Activated CD4-positive, alpha-beta T cell treated with anti-CD3 and anti-CD28 coated beads for 36 hours (primary cell): ENCODE measurements at regions of chr12 and their contacts with region 1.

Region 1: GRCh38 chr12:123983822-123984485 is 10.9 kb downstream of the ZNF664 start:
- DNase-seq: peak; percentile 65
- ATAC-seq: peak; percentile 90
- H3K4me3 Mint-ChIP-seq: no peak overlapping the region
- H3K27ac Mint-ChIP-seq: no peak overlapping the region
- H3K4me1 Mint-ChIP-seq: peaks cover 18% of the 10 kb centered on the region
- H3K27me3 Mint-ChIP-seq: no peaks in the 10 kb centered on the region

Region 2: GRCh38 chr12:123801573-123802178 is 182.3 kb before region 1 on chr12:
- CTCF ChIA-PET with region 1: interaction called, 6 read pairs
- POLR2A ChIA-PET with region 1: no interaction called
- intact Hi-C with region 1: loop called in 1 of 2 experiments (anchors 1 kb)
- DNase-seq: no peak
- ATAC-seq: no peak
- H3K4me3 Mint-ChIP-seq: no peak overlapping the region
- H3K27ac Mint-ChIP-seq: no peak overlapping the region
- H3K4me1 Mint-ChIP-seq: no peaks in the 10 kb centered on the region
- H3K27me3 Mint-ChIP-seq: no peaks in the 10 kb centered on the region

Region 3: DNA sequence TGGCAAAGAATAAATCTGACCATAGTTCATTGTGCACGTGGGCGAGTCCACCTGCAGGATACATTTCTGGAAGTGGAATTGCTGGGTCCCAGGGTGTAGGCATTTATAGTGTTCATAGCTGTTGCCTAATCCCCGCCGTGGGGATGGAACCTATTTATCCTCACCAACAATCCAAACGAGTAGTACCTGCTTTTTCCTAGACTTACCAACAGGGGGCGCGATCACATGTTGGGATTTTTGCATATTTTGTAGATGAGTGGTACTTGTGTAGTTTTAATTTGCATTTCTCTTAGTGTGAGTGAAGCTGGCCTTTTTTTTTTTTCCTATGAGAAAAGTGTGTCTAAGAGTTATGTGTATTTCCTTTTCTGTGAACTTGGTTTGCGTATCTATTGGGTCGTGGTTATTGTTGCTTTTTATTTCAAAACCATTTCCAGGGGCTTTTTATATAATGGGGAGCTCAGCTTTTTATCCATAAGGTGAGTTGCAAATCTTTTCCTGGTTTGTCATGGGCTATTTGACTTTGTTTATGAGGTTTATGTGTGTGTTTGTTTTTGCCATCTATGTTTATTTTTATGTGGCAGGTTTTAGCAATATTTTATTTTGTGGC is 78.5 kb before region 1 on chr12:
- CTCF ChIA-PET with region 1: interaction called, 60 read pairs
- POLR2A ChIA-PET with region 1: no interaction called
- intact Hi-C with region 1: loop called (anchors 1 kb)
- DNase-seq: peak; percentile 83
- ATAC-seq: peak; percentile 63
- H3K4me3 Mint-ChIP-seq: no peak overlapping the region
- H3K27ac Mint-ChIP-seq: no peak overlapping the region
- H3K4me1 Mint-ChIP-seq: peaks cover 9% of the 10 kb centered on the region
- H3K27me3 Mint-ChIP-seq: peaks cover 7% of the 10 kb centered on the region

Region 4: GRCh38 chr12:123912415-123913380 is 71.3 kb before region 1 on chr12:
- CTCF ChIA-PET with region 1: interaction called, 11 read pairs
- POLR2A ChIA-PET with region 1: no interaction called
- intact Hi-C with region 1: no loop called
- DNase-seq: no peak
- ATAC-seq: no peak
- H3K4me3 Mint-ChIP-seq: no peak overlapping the region
- H3K27ac Mint-ChIP-seq: no peak overlapping the region
- H3K4me1 Mint-ChIP-seq: peaks cover 17% of the 10 kb centered on the region
- H3K27me3 Mint-ChIP-seq: no peaks in the 10 kb centered on the region